AG04449 (cell line): ENCODE measurements at regions of chr10 and their contacts with region 1.

Region 1: GRCh38 chr10:75235375-75236177 is at the start of gene COMTD1:
- DNase-seq: no peak
- H3K4me3 ChIP-seq: peak within 1 kb of the TSS; percentile 71
- CTCF ChIP-seq: peak; percentile 100

Region 2: DNA sequence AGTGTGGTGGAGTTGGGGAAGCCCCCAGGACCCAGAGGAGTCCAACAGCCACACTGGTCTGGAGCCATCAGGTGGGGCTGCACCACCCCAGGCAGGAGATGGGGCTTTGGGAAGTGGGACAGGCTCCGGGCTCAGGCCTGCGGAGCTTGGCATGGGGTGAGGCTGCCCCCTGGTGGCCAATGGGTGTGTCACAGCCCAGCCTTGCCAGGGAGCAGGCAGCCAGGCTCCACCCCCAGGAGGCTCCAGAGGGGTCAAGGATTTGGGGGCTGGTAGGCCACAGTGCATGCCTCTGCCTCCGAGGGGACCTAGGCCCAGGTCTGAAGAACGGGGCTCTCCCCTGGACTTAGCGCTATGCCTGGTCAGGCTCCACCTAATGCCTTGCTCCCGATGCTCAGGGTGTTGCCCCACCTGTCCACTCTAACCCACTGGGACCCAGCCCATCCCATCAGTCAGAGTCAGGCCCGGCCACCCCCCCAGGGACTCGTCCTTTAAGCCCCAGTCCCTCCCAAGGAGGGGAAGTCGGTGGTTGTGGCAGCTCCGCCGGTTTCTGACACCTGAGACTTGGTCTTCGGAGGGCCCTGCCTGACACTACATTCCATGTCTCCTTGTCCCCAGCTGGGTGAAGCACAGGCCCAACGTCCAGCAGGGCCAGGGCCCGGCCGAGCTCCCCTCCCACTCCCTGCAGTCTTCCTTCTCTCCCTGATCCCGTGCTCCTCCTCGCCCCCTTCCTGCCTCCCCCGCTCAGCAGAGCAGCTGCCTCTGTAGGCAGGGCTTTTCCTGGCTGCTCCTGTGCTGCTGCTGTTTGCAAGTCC is 135.4 kb before region 1 on chr10:
- CTCF ChIA-PET with region 1: interaction called, 27 read pairs
- POLR2A ChIA-PET with region 1: no interaction called
- DNase-seq: no peak
- H3K4me3 ChIP-seq: no peak overlapping the region
- CTCF ChIP-seq: peak; percentile 97

Region 3: DNA sequence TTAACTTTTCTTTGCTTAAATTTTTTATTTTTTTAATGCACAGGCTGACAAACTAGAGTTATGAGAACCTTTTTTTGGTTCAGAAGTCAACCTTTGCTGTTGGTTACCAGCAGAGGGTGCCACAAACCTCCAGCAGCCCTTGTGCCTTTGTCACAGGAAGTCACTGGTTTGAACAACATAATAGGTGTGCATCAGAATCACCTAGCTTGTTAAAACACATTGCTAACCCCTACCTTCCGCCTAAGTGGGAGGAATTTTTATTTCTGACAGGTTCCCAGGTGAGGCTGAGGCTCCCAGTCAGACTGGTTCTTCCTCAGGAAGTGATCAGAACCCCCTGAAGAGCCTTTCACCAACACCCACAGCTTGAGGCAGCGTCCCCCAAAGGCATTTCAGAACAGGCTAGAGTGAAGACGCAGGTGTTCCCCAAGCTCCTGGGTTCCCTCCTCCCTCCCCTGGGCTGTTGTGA is 47.6 kb before region 1 on chr10:
- CTCF ChIA-PET with region 1: interaction called, 302 read pairs
- POLR2A ChIA-PET with region 1: interaction called, 5 read pairs
- DNase-seq: no peak
- H3K4me3 ChIP-seq: no peak overlapping the region
- CTCF ChIP-seq: peak; percentile 68

Region 4: GRCh38 chr10:75202321-75203045 is 33.1 kb before region 1 on chr10:
- CTCF ChIA-PET with region 1: interaction called, 26 read pairs
- POLR2A ChIA-PET with region 1: no interaction called
- DNase-seq: no peak
- H3K4me3 ChIP-seq: no peak overlapping the region
- CTCF ChIP-seq: no peak

Region 5: DNA sequence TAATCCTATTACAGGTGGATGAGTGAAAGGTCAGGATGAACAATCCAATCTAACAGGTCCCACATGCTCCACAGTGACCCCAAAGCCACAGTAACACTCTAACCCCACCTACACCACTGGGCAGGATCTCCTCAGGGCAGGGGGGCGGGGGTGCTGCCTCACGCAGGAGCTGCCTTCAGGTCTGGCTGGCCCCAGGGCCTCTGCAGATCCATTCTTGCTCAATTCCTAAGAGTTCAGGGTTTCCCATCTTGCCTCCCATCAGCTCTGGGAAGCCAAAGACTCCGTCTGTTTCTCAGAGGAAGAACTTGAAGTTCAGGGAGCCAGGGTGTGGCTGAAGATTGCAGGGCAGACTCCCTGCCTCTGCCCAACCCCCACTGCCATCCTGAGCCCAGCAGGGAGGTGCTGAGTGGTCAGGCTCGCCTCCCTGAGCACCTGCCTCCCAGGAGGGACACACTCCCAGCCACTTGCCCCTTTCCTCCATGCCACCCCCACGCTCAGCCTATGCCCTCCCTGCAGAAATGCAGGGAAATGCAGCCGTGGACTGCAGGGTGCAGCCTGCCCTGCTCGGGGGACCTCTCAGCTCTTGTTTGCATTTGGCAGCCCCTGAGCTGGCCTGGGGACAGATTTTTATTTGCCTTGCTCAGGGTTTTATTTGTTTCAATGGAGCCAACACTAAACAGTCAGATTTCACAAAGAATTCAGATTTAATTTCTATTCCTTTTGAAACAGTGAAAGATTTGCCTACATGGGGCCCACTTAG is 10.1 kb after region 1 on chr10:
- CTCF ChIA-PET with region 1: interaction called, 56 read pairs
- POLR2A ChIA-PET with region 1: no interaction called
- DNase-seq: no peak
- H3K4me3 ChIP-seq: no peak overlapping the region
- CTCF ChIP-seq: no peak

Region 6: DNA sequence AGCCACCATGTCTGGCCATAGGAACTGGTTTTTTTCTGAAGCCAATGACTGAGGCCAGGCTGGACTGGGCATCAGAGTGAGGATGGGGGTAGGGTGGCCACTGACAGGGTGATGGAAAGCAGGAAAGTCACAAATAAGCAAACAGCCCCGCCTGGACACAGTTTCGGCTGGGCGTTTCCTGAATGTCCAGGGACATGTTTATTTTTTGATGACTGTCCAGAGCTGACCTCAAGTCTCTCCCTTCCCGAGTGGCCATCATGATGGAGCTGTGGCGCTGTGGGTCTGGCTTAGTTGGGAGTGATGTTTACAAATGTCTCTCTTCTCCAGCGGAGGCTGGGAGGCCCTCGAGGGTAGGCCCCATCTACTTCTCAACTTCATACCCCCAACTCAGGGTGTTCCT is 37.3 kb after region 1 on chr10:
- CTCF ChIA-PET with region 1: no interaction called
- POLR2A ChIA-PET with region 1: no interaction called
- DNase-seq: no peak
- H3K4me3 ChIP-seq: no peak overlapping the region
- CTCF ChIP-seq: no peak